ENCODE measurements at regions of chr12 and their contacts with region 1.

Region 1: GRCh38 chr12:56688129-56688845 is at the start of gene PTGES3:
- H3K4me3 ChIP-seq: peak within 1 kb of the TSS; percentile 59
- H3K27ac ChIP-seq: peak within 1 kb of the TSS; percentile 100
- H3K4me1 ChIP-seq: peaks cover 7% of the 10 kb centered on the region; the same call in 1 of the 2 replicates
- CTCF ChIP-seq: peak; percentile 63; the same call in 1 of the 2 replicates

Region 2: GRCh38 chr12:56565510-56566101 is 122.7 kb before region 1 on chr12:
- CTCF ChIA-PET with region 1: no interaction called
- POLR2A ChIA-PET with region 1: no interaction called
- H3K4me3 ChIP-seq: no peak overlapping the region
- H3K27ac ChIP-seq: peak overlapping the region; percentile 1; the same call in 1 of the 2 replicates
- H3K4me1 ChIP-seq: no peaks in the 10 kb centered on the region; the same call in 1 of the 2 replicates
- CTCF ChIP-seq: no peak; the same call in 1 of the 2 replicates

Region 3: GRCh38 chr12:56593909-56594621 is 94.2 kb before region 1 on chr12:
- CTCF ChIA-PET with region 1: no interaction called
- POLR2A ChIA-PET with region 1: no interaction called
- H3K4me3 ChIP-seq: no peak overlapping the region
- H3K27ac ChIP-seq: peak overlapping the region; percentile 12; the same call in 1 of the 2 replicates
- H3K4me1 ChIP-seq: no peaks in the 10 kb centered on the region; the same call in 1 of the 2 replicates
- CTCF ChIP-seq: peak; percentile 80

Region 4: DNA sequence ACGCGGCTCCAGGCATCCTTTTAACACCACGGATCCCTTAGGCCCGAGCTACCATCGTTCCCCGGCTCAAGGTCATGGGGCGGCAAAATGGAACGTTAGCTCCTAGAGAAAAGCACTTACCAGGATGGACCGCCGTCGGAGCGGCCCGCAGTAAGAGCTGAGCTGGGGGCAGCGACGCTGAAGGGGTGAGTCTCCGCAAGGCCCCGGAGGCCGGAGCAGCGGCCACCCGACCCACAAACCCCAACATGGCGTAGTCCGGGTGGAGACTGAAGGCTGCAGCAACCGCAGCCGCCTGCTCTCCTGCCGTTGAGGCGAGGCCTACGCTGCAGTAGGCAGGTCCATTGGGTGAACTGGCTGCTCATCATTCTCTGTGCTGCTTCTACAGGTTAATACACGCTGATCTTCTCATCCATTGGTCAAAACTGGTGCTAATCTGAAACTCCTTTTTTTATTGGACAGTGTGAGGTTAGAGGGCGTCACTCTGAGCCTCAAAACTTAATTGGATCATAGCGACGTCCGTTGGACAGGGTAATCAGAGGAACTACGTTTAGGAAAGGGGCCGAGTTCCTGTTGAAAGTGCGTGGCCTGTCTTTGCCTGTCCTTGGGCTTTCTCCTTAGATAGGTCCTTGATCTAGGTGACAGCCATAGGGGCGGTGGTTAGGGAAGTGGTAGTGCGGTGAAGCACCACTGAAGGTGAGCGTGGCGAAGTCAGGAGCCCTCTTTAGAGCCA is 42.4 kb before region 1 on chr12 and contains the start of gene ATP5F1B:
- CTCF ChIA-PET with region 1: interaction called, 8 read pairs
- POLR2A ChIA-PET with region 1: interaction called, 13 read pairs
- H3K4me3 ChIP-seq: peak within 1 kb of the TSS; percentile 64
- H3K27ac ChIP-seq: peak within 1 kb of the TSS; percentile 82
- H3K4me1 ChIP-seq: 0 out of 2 replicates have a peak, but pooled peaks cover 2% of the 10 kb centered on the region
- CTCF ChIP-seq: no peak

Region 5: GRCh38 chr12:56677680-56678079 is 10.6 kb before region 1 on chr12:
- CTCF ChIA-PET with region 1: interaction called, 4 read pairs
- POLR2A ChIA-PET with region 1: interaction called, 14 read pairs
- H3K4me3 ChIP-seq: no peak overlapping the region
- H3K27ac ChIP-seq: no peak overlapping the region
- H3K4me1 ChIP-seq: peaks cover 8% of the 10 kb centered on the region
- CTCF ChIP-seq: no peak

Region 6: GRCh38 chr12:56699020-56699661 is 10.9 kb after region 1 on chr12:
- CTCF ChIA-PET with region 1: no interaction called
- POLR2A ChIA-PET with region 1: interaction called, 13 read pairs
- H3K4me3 ChIP-seq: no peak overlapping the region
- H3K27ac ChIP-seq: no peak overlapping the region
- H3K4me1 ChIP-seq: peaks cover 2% of the 10 kb centered on the region; the same call in 1 of the 2 replicates
- CTCF ChIP-seq: no peak

Region 7: GRCh38 chr12:56709759-56710376 is 21.6 kb after region 1 on chr12:
- CTCF ChIA-PET with region 1: no interaction called
- POLR2A ChIA-PET with region 1: interaction called, 25 read pairs
- H3K4me3 ChIP-seq: no peak overlapping the region
- H3K27ac ChIP-seq: no peak overlapping the region
- H3K4me1 ChIP-seq: no peaks in the 10 kb centered on the region
- CTCF ChIP-seq: no peak

Region 8: GRCh38 chr12:56724972-56725722 is 36.9 kb after region 1 on chr12 and contains the start of gene NACA:
- CTCF ChIA-PET with region 1: no interaction called
- POLR2A ChIA-PET with region 1: interaction called, 63 read pairs
- H3K4me3 ChIP-seq: peak within 1 kb of the TSS; percentile 73
- H3K27ac ChIP-seq: peak within 1 kb of the TSS; percentile 99
- H3K4me1 ChIP-seq: peaks cover 7% of the 10 kb centered on the region; the same call in 1 of the 2 replicates
- CTCF ChIP-seq: peak; percentile 12; the same call in 1 of the 2 replicates

Region 9: GRCh38 chr12:56839915-56840325 is 151.6 kb after region 1 on chr12:
- CTCF ChIA-PET with region 1: no interaction called
- POLR2A ChIA-PET with region 1: no interaction called
- H3K4me3 ChIP-seq: no peak overlapping the region
- H3K27ac ChIP-seq: no peak overlapping the region
- H3K4me1 ChIP-seq: no peaks in the 10 kb centered on the region
- CTCF ChIP-seq: peak; percentile 82

Measured in HEK293 (cell line).